ENCODE measurements at regions of chr2 and their contacts with region 1.

Region 1: GRCh38 chr2:164910101-164910899 is 45.0 kb downstream of the SLC38A11 start:
- DNase-seq: peak; percentile 56
- ATAC-seq: peak; percentile 98
- H3K4me3 Mint-ChIP-seq: no peak overlapping the region
- H3K27ac Mint-ChIP-seq: no peak overlapping the region
- H3K4me1 Mint-ChIP-seq: peaks cover 9% of the 10 kb centered on the region
- H3K27me3 Mint-ChIP-seq: no peaks in the 10 kb centered on the region

Region 2: GRCh38 chr2:164896634-164897355 is 13.5 kb before region 1 on chr2:
- CTCF ChIA-PET with region 1: no interaction called
- POLR2A ChIA-PET with region 1: no interaction called
- intact Hi-C with region 1: loop called in 1 of 2 experiments (anchors 1 kb)
- DNase-seq: peak; percentile 13
- ATAC-seq: peak; percentile 90
- H3K4me3 Mint-ChIP-seq: no peak overlapping the region
- H3K27ac Mint-ChIP-seq: no peak overlapping the region
- H3K4me1 Mint-ChIP-seq: peaks cover 6% of the 10 kb centered on the region
- H3K27me3 Mint-ChIP-seq: no peaks in the 10 kb centered on the region

Region 3: GRCh38 chr2:166384774-166385173 is 1474.5 kb after region 1 on chr2:
- CTCF ChIA-PET with region 1: no interaction called
- POLR2A ChIA-PET with region 1: no interaction called
- intact Hi-C with region 1: no loop called
- DNase-seq: no peak
- ATAC-seq: no peak
- H3K4me3 Mint-ChIP-seq: no peak overlapping the region
- H3K27ac Mint-ChIP-seq: no peak overlapping the region
- H3K4me1 Mint-ChIP-seq: no peaks in the 10 kb centered on the region
- H3K27me3 Mint-ChIP-seq: no peaks in the 10 kb centered on the region